ENCODE measurements at regions of chr13 and their contacts with region 1.

Region 1: DNA sequence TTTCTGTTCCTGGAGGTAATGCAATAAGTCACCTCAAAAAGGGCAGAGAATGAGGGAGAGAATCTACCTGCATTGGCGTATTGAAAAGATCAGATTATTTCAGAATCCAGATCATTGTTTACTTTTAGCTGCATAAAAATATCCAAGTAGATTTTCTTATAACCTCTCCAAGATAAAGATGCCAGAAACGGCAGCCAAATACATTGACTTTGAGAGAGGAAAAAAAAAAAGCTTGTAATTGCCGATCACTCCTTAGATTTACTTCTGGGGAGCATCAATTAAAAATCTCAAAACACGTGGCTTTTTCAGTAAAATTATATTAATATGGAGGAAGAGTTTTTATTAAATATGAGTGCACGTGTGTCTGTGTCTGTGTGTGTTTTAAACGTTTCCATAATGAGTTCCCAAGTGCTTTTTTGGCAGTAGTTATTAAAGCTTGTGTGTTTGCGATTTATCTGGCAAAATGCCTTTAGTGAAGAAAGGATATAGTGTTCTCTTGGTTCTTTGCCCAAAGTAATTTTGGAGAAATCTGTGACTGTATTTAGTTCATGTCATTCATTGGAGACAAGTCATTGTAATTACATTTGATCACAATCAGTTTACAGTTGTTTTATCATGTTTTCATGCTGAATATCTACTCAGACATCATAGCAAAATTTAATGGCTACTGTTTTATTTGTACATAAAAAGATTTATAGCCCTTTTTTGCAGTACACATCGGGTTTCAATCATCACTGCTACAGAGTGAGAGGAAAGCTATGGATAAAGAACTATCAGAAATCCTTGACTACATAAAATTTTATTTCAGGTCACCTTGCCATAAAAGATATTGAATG is 176.1 kb downstream of the TM9SF2 start:
- DNase-seq: peak in 1 of 2 experiments; percentile 26
- H3K4me3 ChIP-seq: no peak overlapping the region
- H3K27ac ChIP-seq: no peak overlapping the region
- H3K4me1 ChIP-seq: no peaks in the 10 kb centered on the region
- H3K27me3 ChIP-seq: no peaks in the 10 kb centered on the region
- CTCF ChIP-seq: no peak

Region 2: DNA sequence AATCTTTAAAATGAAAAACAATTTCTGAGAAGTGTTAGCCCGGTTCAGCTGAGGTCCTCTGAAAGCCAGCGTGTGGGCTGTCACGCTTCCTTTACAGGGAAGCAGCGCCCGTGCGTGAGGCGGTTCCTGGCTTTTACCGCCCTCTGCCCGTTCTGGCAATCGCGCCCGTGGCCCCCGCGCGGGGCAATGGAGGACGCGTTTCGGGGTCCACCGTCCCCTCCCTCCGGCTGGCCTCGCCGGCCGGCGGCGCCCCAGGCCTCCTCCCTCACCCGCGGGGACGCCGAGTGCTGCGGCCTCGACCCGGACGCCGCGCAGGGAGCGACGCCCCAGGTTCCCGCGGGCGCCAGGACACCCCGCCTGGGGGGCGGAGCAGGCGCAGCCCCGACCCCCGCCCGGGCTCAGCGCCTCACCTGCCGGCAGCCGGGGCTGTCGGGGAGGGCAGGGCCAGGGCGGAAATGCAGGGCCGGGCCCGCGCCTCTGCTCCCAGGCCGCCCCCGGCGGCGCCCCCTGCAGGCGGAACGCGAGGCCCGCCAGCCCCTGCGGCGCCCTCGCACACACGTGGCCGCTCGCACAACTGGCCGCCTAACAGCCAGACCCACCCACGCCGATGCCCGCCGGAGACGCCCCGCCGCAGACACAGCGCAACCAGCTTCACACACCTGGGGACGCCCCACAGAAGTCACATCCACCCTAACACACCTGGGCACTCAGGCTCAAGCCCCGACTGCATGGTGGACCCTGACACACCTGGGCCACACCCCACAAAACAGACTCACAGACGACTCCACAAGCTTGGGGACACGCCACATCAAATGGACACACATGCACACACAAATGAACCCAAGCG is 911.2 kb after region 1 on chr13 and contains the start of gene GGACT:
- CTCF ChIA-PET with region 1: interaction called, 24 read pairs
- POLR2A ChIA-PET with region 1: no interaction called
- intact Hi-C with region 1: no loop called
- DNase-seq: peak; percentile 41 to 78
- H3K4me3 ChIP-seq: peak within 1 kb of the TSS; percentile 68
- H3K27ac ChIP-seq: no peak within 1 kb of the TSS
- H3K4me1 ChIP-seq: no peaks in the 10 kb centered on the region; the same call in 1 of the 2 replicates
- H3K27me3 ChIP-seq: no peaks in the 10 kb centered on the region
- CTCF ChIP-seq: peak; percentile 69
- total RNA-seq, gene GGACT: 4.9 and 5.3 TPM in 2 replicates